MCF 10A (cell line): ENCODE measurements at regions of chr2 and their contacts with region 1.

Region 1: GRCh38 chr2:238462782-238463396 is 36.2 kb downstream of the ASB1 start:
- DNase-seq: peak; percentile 74
- H3K4me3 Mint-ChIP-seq: no peak overlapping the region
- H3K27ac Mint-ChIP-seq: no peak overlapping the region
- H3K4me1 Mint-ChIP-seq: peaks cover 6% of the 10 kb centered on the region
- H3K27me3 Mint-ChIP-seq: no peaks in the 10 kb centered on the region
- CTCF ChIP-seq: peak; percentile 46

Region 2: DNA sequence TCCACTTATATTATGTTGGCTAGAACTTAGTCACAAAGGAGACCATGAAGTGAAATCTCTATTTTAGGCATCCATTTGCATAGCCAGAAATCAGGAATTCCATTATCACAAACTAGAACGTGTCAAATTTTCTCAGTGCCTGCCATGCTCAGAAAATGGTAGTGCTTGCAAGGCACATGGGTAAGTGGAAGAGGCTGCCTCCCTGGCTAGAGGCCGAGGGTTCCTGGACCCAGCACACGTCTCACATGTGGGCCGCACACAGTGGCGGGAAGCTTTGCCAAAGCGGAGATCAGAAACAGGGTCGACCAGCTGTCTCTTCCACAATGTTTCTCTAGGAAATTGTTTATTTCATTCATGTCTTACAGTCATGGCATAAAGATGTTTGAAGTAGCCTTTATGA is 100.3 kb before region 1 on chr2:
- CTCF ChIA-PET with region 1: interaction called, 3 read pairs
- POLR2A ChIA-PET with region 1: interaction called, 3 read pairs
- intact Hi-C with region 1: loop called (anchors 5 kb)
- DNase-seq: no peak
- H3K4me3 Mint-ChIP-seq: no peak overlapping the region
- H3K27ac Mint-ChIP-seq: no peak overlapping the region
- H3K4me1 Mint-ChIP-seq: peaks cover 1% of the 10 kb centered on the region
- H3K27me3 Mint-ChIP-seq: no peaks in the 10 kb centered on the region
- CTCF ChIP-seq: no peak

Region 3: GRCh38 chr2:238370823-238371372 is 92.0 kb before region 1 on chr2:
- CTCF ChIA-PET with region 1: interaction called, 3 read pairs
- POLR2A ChIA-PET with region 1: interaction called, 3 read pairs
- intact Hi-C with region 1: loop called (anchors 1 kb)
- DNase-seq: peak; percentile 71
- H3K4me3 Mint-ChIP-seq: no peak overlapping the region
- H3K27ac Mint-ChIP-seq: no peak overlapping the region
- H3K4me1 Mint-ChIP-seq: peaks cover 6% of the 10 kb centered on the region
- H3K27me3 Mint-ChIP-seq: no peaks in the 10 kb centered on the region
- CTCF ChIP-seq: peak; percentile 75